Mammary epithelial cell (primary cell): ENCODE measurements at regions of chr2 and their contacts with region 1.

Region 1: GRCh38 chr2:50995610-50996009 is 36.3 kb downstream of the NRXN1 start:
- DNase-seq: no peak
- H3K4me3 ChIP-seq: no peak overlapping the region
- H3K27ac ChIP-seq: no peak overlapping the region
- H3K4me1 ChIP-seq: no peaks in the 10 kb centered on the region
- H3K27me3 ChIP-seq: no peaks in the 10 kb centered on the region
- CTCF ChIP-seq: no peak

Region 2: DNA sequence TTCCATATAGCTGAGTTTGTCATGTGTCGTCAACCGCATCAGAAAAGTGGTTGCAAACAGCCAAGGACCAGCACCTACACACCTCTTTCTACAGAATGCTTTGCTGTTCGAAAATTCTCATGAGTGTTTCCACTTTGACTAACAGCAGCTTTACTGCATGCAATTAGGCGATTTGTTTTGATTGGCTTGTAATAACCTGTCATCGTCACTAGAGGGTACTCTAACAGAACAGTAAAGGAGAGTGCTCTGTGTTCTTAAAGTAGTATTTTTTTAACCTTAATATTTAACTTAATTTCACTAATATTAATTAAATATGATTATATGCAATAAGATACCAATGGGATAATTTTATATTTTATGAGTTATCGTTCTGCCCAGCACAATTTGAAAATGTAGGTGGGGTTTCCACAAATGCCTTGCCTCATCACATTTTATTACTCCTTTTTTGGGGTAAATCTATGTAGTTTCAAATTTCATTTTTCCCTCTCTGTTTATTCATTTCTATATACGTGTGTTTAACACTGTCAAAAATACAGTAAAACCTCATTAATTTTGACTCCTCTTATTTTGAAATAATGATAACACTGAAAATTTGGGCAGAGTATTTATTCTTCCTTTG is 465.9 kb before region 1 on chr2:
- CTCF ChIA-PET with region 1: no interaction called
- dilution Hi-C with region 1: no loop called
- in situ Hi-C with region 1: no loop called
- intact Hi-C with region 1: no loop called
- DNase-seq: peak; percentile 39
- H3K4me3 ChIP-seq: no peak overlapping the region
- H3K27ac ChIP-seq: no peak overlapping the region
- H3K4me1 ChIP-seq: peaks cover 10% of the 10 kb centered on the region
- H3K27me3 ChIP-seq: no peaks in the 10 kb centered on the region
- CTCF ChIP-seq: peak; percentile 73 to 76

Region 3: GRCh38 chr2:50575232-50575631 is 420.4 kb before region 1 on chr2:
- CTCF ChIA-PET with region 1: no interaction called
- dilution Hi-C with region 1: no loop called
- in situ Hi-C with region 1: no loop called
- intact Hi-C with region 1: no loop called
- DNase-seq: no peak
- H3K4me3 ChIP-seq: no peak overlapping the region
- H3K27ac ChIP-seq: no peak overlapping the region
- H3K4me1 ChIP-seq: no peaks in the 10 kb centered on the region
- H3K27me3 ChIP-seq: peaks cover 2% of the 10 kb centered on the region
- CTCF ChIP-seq: no peak

Region 4: GRCh38 chr2:51028829-51029228 is 33.2 kb after region 1 on chr2:
- CTCF ChIA-PET with region 1: no interaction called
- dilution Hi-C with region 1: no loop called
- in situ Hi-C with region 1: no loop called
- intact Hi-C with region 1: no loop called
- DNase-seq: no peak
- H3K4me3 ChIP-seq: no peak overlapping the region
- H3K27ac ChIP-seq: no peak overlapping the region
- H3K4me1 ChIP-seq: no peaks in the 10 kb centered on the region
- H3K27me3 ChIP-seq: peaks cover 9% of the 10 kb centered on the region
- CTCF ChIP-seq: no peak

Region 5: GRCh38 chr2:51065276-51065675 is 69.7 kb after region 1 on chr2:
- CTCF ChIA-PET with region 1: no interaction called
- dilution Hi-C with region 1: no loop called
- in situ Hi-C with region 1: no loop called
- intact Hi-C with region 1: no loop called
- DNase-seq: no peak
- H3K4me3 ChIP-seq: no peak overlapping the region
- H3K27ac ChIP-seq: no peak overlapping the region
- H3K4me1 ChIP-seq: no peaks in the 10 kb centered on the region
- H3K27me3 ChIP-seq: peaks cover 1% of the 10 kb centered on the region
- CTCF ChIP-seq: no peak

Region 6: GRCh38 chr2:51528156-51528555 is 532.5 kb after region 1 on chr2:
- CTCF ChIA-PET with region 1: interaction called, 11 read pairs
- dilution Hi-C with region 1: no loop called
- in situ Hi-C with region 1: no loop called
- intact Hi-C with region 1: no loop called
- DNase-seq: no peak
- H3K4me3 ChIP-seq: no peak overlapping the region
- H3K27ac ChIP-seq: no peak overlapping the region
- H3K4me1 ChIP-seq: no peaks in the 10 kb centered on the region
- H3K27me3 ChIP-seq: no peaks in the 10 kb centered on the region
- CTCF ChIP-seq: no peak